Transverse colon (tissue), 4 donors: ENCODE measurements at regions of chr4 and their contacts with region 1.

Region 1: DNA sequence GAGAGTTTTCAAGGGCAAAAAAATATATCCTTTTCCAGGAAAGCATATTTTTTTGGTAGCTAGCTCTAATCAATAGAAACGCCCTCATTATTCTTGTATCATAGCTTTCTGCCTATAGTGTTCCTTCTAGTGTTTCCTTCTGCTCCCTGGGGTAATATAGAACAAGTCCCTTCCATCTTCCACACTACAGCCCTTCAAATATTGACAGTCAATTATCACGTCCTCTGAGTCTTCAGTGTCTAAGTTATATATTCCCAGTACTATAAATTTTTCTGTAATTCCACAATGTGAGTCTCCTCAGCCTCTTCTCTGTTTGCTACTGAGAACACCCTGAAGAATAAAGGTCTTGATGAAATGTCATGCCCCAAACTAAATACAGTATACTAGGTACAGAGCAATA is 1088.0 kb upstream of the PCDH7 start:
- DNase-seq: no peak
- H3K4me3 ChIP-seq: no peak overlapping the region
- H3K27ac ChIP-seq: no peak overlapping the region
- H3K4me1 ChIP-seq: no peaks in the 10 kb centered on the region
- H3K27me3 ChIP-seq: no peaks in the 10 kb centered on the region
- CTCF ChIP-seq: no peak
- EP300 ChIP-seq: no peak
- POLR2A ChIP-seq: no peak

Region 2: GRCh38 chr4:29596228-29596627 is 36.0 kb before region 1 on chr4:
- in situ Hi-C with region 1: no loop called
- intact Hi-C with region 1: loop called (anchors 2 kb)
- DNase-seq: no peak
- H3K4me3 ChIP-seq: no peak overlapping the region
- H3K27ac ChIP-seq: no peak overlapping the region
- H3K4me1 ChIP-seq: no peaks in the 10 kb centered on the region
- H3K27me3 ChIP-seq: no peaks in the 10 kb centered on the region
- CTCF ChIP-seq: no peak
- EP300 ChIP-seq: no peak
- POLR2A ChIP-seq: no peak

Region 3: DNA sequence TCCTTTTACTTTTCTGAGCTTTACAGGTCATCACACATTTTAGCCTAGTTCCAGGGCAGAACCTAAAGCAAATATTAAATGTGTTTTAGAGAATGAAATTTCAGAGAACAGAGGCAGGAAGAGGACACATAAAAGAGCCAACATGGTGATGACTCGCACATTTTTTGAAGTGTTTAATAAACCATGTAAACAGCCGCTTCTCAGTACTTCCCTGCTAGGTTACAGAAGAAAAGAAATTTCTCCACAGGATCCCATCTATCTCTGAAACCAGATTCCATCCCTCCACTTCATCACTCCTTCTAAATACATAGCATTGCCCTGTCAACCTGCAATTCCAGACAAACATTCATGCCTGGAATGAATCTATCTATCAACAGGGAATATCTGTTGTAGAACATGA is 138.4 kb after region 1 on chr4:
- in situ Hi-C with region 1: no loop called
- intact Hi-C with region 1: no loop called
- DNase-seq: no peak
- H3K4me3 ChIP-seq: no peak overlapping the region
- H3K27ac ChIP-seq: no peak overlapping the region
- H3K4me1 ChIP-seq: no peaks in the 10 kb centered on the region
- H3K27me3 ChIP-seq: no peaks in the 10 kb centered on the region
- CTCF ChIP-seq: no peak
- EP300 ChIP-seq: no peak
- POLR2A ChIP-seq: no peak